RWPE1 (cell line): ENCODE measurements at regions of chr5 and their contacts with region 1.

Region 1: DNA sequence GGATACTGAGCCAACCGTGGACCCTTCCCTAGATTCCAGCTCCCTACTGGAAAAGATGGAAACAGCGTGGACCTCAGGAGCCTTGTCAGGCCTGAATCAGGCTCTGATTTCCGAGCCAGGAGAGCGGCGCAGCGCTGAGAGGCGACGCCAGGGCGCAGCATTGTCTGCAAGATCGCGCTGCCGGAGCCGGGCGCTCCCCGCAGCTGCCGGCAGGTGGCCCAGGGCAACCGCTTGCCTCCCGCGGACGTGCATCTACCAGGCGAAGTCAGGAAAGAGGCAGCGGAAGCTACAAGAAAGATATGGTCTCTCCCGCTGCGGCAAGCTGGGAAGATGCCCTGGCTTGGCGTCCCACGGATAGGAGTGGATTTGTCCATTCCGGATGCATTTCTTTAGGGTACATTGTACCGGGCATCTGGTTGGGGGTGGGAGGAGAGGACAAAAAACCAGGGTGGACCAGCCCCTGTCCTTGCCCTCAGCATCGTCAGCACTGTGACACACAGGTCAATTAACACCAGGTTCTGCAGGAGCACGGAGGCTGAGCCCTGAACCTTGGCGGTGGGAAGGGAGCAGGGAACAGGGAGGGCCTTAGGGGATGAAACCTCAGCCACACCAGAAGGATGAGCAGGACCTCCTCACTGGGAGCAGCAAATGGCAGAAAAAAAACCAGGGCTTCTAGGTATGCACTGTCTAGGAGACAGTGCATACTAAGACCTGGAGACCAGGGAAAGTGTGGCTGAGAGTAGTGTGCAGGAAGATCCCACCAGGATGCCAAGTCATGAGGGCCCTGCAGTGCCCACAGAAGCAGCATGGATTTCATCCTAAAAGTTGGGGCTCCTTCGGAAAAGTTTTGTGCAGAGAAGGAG is 55.9 kb downstream of the SFXN1 start:
- DNase-seq: peak; percentile 92
- H3K27ac ChIP-seq: no peak overlapping the region
- CTCF ChIP-seq: peak; percentile 98

Region 2: DNA sequence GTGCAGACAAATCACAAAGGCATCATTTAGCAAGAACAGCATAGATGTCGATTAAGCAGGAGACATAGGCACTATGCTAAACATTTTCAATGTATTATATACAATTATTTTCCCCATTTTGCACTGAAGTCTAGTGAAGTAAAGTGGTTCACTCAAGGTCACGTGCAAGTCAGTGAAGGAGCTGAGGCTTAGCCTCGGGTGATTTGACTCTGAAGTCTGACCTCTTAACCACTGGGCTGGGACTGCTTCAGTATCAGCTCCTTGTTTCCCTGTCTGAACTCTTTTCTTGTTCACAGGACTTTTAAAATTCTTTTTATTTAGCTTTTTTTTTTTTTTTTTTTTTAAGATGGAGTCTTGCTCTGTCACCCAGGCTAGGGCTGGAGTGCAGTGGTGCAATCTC is 353.0 kb before region 1 on chr5:
- CTCF ChIA-PET with region 1: no interaction called
- POLR2A ChIA-PET with region 1: no interaction called
- DNase-seq: no peak
- H3K27ac ChIP-seq: no peak overlapping the region
- CTCF ChIP-seq: no peak

Region 3: GRCh38 chr5:175521313-175521833 is 12.9 kb before region 1 on chr5:
- CTCF ChIA-PET with region 1: interaction called, 10 read pairs
- POLR2A ChIA-PET with region 1: no interaction called
- DNase-seq: no peak
- H3K27ac ChIP-seq: no peak overlapping the region
- CTCF ChIP-seq: no peak

Region 4: DNA sequence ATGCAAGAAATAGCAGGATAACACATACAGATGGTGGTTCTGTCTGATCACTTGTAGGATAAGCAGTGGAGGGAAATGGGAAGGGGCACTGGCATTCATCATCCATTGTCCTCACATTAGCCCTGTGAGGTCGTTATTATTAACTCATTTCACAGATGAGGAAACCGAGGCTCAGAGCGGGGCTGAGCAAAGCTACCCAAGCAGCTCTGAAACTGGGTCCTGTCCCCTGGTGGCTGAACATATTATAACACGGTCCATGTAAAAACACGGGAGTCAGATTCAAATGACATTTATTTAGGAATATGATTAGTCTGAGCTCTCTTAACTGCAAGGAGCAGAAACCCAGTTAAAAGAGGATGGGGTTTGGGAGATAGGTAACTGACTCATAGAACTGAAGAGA is 166.7 kb after region 1 on chr5:
- CTCF ChIA-PET with region 1: interaction called, 18 read pairs
- POLR2A ChIA-PET with region 1: no interaction called
- DNase-seq: peak; percentile 22
- H3K27ac ChIP-seq: no peak overlapping the region
- CTCF ChIP-seq: peak; percentile 47

Region 5: GRCh38 chr5:175718401-175719108 is 184.3 kb after region 1 on chr5:
- CTCF ChIA-PET with region 1: interaction called, 34 read pairs
- POLR2A ChIA-PET with region 1: no interaction called
- DNase-seq: peak; percentile 50
- H3K27ac ChIP-seq: no peak overlapping the region
- CTCF ChIP-seq: peak; percentile 54

Region 6: DNA sequence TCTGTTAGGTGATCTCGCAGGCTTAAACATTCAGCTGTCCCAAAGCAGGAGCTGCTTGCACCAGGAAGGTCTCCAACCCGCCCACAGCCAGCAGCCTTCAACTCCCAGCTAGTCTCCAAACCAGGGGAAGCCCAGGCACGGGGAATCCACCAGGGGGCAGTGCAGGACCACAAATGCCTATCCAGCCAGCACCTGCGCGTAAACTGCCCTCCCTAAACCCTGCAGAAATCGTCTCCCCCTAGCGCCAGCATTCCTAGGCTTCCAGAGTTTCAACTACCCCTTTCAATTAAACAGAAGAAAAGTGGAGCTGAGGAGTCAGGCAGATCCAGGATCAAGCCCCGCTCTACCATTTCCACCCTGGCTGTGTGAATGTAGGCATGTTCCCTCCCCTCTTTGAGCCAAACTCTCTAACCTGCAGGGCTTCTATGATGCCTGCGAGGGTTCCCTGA is 195.6 kb after region 1 on chr5:
- CTCF ChIA-PET with region 1: interaction called, 21 read pairs
- POLR2A ChIA-PET with region 1: no interaction called
- DNase-seq: peak; percentile 98
- H3K27ac ChIP-seq: no peak overlapping the region
- CTCF ChIP-seq: peak; percentile 95

Region 7: DNA sequence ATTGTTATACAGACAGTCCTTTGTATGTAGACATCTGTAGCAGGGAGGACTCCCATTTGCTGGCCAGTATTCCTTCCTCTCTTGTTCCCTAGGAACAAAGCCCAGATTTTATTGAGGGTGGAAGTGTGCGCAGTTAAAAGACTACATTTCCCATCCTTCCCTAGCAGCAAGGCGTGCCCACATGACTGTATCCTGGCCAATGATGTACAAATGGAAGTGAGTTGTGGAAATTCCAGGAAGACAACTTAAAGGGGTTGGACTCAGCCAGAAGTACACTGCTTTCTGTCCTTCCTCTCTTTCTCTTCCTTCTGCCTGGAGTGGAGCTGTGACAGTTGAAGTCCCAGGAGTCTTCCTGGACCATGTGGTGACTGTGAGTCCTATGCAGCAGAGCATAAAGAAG is 212.6 kb after region 1 on chr5:
- CTCF ChIA-PET with region 1: no interaction called
- POLR2A ChIA-PET with region 1: no interaction called
- DNase-seq: peak; percentile 61
- H3K27ac ChIP-seq: no peak overlapping the region
- CTCF ChIP-seq: no peak